ENCODE measurements at regions of chr14 and their contacts with region 1.

Region 1: DNA sequence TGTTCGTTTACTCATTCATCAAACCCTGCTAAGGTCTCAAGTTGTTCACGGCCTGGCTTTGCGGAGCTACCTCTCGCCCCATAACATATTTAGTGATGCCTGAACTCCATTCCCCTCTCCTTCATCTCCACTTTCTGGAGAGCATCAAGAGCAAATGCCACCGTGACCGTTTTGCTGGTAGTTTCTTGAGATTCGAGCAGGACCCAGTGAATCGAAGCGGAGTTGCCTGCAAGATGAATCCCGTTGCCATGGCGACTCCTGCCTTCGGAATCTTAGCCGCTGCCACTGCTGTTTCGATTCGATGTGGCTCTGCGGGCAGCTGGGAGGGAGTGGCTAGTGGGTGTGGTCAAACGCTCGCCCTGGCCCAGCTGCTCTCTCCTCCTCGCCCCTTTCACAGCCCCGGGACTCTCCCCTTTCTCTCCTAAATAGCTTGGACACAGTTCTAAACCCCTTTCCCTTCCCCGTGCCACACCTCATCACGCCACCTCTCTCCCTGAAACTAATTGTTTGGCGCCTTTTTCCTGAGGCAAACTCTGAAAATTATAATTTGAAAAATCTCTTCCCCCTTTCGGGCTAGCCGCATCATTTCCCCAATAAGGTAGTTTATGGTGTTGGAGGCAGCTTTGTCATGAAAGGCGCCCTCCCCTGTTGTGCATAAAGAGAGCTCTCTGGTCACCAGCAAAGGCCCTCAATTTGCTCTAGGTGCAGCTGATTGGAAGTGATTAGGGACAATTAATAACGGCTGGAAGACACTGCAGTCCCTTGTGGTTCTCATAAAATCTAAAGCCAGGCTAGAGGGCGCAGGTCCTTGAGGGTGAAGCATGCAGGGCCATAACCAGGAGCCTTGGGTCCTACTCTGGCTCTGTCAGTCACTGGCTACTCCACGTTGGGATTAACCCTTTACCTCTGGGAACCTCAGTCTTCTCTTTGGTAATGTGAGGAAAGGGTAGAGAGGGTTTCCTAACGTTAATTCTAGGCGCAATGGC is 1.6 kb downstream of the DAAM1 start:
- DNase-seq: peak; percentile 34 to 76 (median 49)
- ATAC-seq: peak; percentile 4
- H3K4me3 ChIP-seq: peak overlapping the region; percentile 93
- H3K4me3 Mint-ChIP-seq: peak overlapping the region; percentile 92 to 100 (median 96)
- H3K27ac ChIP-seq: peak overlapping the region; percentile 91
- H3K27ac Mint-ChIP-seq: peak overlapping the region; percentile 85 to 98 (median 93)
- H3K4me1 ChIP-seq: peaks cover 0 to 10% of the 10 kb centered on the region in 2 donors
- H3K4me1 Mint-ChIP-seq: peaks cover 15 to 30% (median 21%) of the 10 kb centered on the region in 7 donors
- H3K27me3 ChIP-seq: no peaks in the 10 kb centered on the region
- H3K27me3 Mint-ChIP-seq: peaks cover 0 to 22% (median 4%) of the 10 kb centered on the region in 5 donors

Region 2: GRCh38 chr14:58239244-58240195 is 950.6 kb before region 1 on chr14:
- CTCF ChIA-PET with region 1: no interaction called
- POLR2A ChIA-PET with region 1: no interaction called
- intact Hi-C with region 1: loop called (anchors 1 kb)
- DNase-seq: peak; percentile 66 to 89 (median 84)
- ATAC-seq: peak; percentile 39
- H3K4me3 ChIP-seq: peak overlapping the region; percentile 78
- H3K4me3 Mint-ChIP-seq: no peak overlapping the region
- H3K27ac ChIP-seq: peak overlapping the region; percentile 75
- H3K27ac Mint-ChIP-seq: no peak overlapping the region
- H3K4me1 ChIP-seq: peaks cover 8 to 9% of the 10 kb centered on the region in 2 donors
- H3K4me1 Mint-ChIP-seq: peaks cover 11 to 30% (median 27%) of the 10 kb centered on the region in 7 donors
- H3K27me3 ChIP-seq: no peaks in the 10 kb centered on the region
- H3K27me3 Mint-ChIP-seq: peaks cover 0 to 2% (median 0%) of the 10 kb centered on the region in 5 donors

Region 3: DNA sequence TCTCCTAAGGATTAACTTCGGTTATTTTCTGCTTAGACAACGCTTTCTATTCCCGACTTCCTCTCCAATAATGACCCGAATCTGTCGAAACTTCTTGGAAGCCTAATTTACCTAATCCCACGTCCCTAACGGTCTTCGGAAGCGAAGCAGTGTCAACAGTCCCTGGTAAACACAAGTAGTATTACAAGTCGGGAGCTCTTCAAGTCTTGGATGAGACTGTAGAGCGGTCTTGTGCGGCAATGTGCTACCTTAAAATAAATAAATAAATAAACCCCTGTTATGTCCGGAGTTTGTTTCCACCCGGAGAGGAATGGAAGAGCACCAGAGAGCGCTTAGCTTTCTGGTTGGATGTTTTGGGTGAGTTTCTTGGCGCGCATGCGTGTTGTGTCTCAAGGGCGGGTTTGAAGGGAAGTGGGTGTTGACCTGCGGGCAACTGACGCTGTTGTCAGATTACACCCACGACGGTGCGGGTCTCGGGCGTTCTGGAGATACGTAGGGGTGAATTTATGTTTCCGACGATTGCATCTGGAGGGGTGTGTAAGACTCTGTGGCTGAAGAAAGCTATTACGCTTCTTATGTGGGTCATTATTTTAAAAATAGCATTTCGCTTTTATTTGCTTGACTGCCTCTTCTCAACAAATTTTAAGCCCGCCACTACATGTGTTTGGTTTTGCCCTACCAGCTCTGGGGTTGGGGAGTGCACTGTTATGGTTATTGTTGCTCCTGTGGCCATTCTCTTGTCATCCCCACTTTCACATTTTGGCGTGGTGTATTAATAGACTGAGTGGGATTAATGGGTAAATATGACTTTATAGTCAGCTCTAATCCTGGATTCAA is 762.6 kb before region 1 on chr14 and contains the starts of genes KIAA0586 and TIMM9:
- CTCF ChIA-PET with region 1: no interaction called
- POLR2A ChIA-PET with region 1: no interaction called
- intact Hi-C with region 1: loop called (anchors 1 kb)
- DNase-seq: peak; percentile 82 to 98 (median 97)
- ATAC-seq: peak; percentile 94
- H3K4me3 ChIP-seq: peak within 1 kb of the TSS; percentile 88
- H3K4me3 Mint-ChIP-seq: peak within 1 kb of the TSS; percentile 82 to 100 (median 94)
- H3K27ac ChIP-seq: peak within 1 kb of the TSS; percentile 93
- H3K27ac Mint-ChIP-seq: peak within 1 kb of the TSS; percentile 95 to 99 (median 98)
- H3K4me1 ChIP-seq: peaks cover 13 to 17% of the 10 kb centered on the region in 2 donors
- H3K4me1 Mint-ChIP-seq: peaks cover 18 to 65% (median 53%) of the 10 kb centered on the region in 7 donors
- H3K27me3 ChIP-seq: no peaks in the 10 kb centered on the region
- H3K27me3 Mint-ChIP-seq: peaks cover 0 to 3% (median 0%) of the 10 kb centered on the region in 5 donors
- total RNA-seq, gene KIAA0586: 26.4 to 52.5 (median 34.8) TPM
- total RNA-seq, gene TIMM9: 22.1 to 42.5 (median 37.0) TPM

Region 4: DNA sequence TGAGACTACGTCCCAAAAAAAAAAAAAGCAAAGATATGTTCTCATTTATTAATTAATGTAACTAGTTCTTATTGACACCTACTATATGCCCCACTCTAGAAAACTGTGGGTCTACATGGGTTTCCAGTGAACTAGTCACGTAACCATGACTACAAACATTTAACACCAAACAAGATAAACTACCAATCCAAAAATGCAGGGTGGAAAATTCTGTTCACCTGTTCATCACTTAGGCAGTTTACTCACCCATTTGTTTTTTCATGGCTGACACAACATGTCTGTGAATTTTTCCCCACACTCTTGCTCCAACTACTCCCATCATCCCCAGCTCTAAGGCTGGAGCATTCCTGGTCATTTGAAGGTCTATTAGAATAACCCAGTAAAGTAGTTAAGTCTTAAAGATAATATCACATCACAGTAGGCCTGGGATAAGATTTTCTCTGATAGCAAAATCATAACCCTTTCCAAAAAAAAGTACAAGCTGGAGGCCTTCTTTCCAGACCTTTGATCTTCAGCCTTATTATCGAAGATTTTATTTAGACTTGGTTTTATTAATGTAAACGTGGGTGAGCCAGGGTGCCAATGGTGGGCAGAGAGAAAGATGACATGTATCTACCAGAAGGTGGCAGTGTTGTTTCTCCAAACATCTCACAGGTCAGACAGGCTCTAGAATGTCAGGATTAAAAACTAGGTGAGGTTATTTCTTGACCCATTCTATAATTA is 63.2 kb before region 1 on chr14:
- CTCF ChIA-PET with region 1: interaction called, 3 read pairs
- POLR2A ChIA-PET with region 1: no interaction called
- intact Hi-C with region 1: loop called in 1 of 2 experiments (anchors 2 kb)
- DNase-seq: peak in 6 of 9 donors; percentile 35 to 65 (median 56)
- ATAC-seq: peak; percentile 82
- H3K4me3 ChIP-seq: no peak overlapping the region
- H3K4me3 Mint-ChIP-seq: no peak overlapping the region
- H3K27ac ChIP-seq: no peak overlapping the region
- H3K27ac Mint-ChIP-seq: no peak overlapping the region
- H3K4me1 ChIP-seq: no peaks in the 10 kb centered on the region
- H3K4me1 Mint-ChIP-seq: no peaks in the 10 kb centered on the region
- H3K27me3 ChIP-seq: peaks cover 0 to 3% of the 10 kb centered on the region in 2 donors
- H3K27me3 Mint-ChIP-seq: peaks cover 14 to 30% (median 17%) of the 10 kb centered on the region in 5 donors

Region 5: GRCh38 chr14:59918824-59919569 is 728.9 kb after region 1 on chr14:
- CTCF ChIA-PET with region 1: no interaction called
- POLR2A ChIA-PET with region 1: no interaction called
- intact Hi-C with region 1: loop called in 1 of 2 experiments (anchors 5 kb)
- DNase-seq: peak in 4 of 9 donors; percentile 7 to 23 (median 19)
- ATAC-seq: peak; percentile 54
- H3K4me3 ChIP-seq: peak overlapping the region; percentile 47
- H3K4me3 Mint-ChIP-seq: peak overlapping the region; percentile 47 to 81 (median 76)
- H3K27ac ChIP-seq: no peak overlapping the region
- H3K27ac Mint-ChIP-seq: no peak overlapping the region
- H3K4me1 ChIP-seq: peaks cover 3 to 7% of the 10 kb centered on the region in 2 donors
- H3K4me1 Mint-ChIP-seq: peaks cover 0 to 19% (median 8%) of the 10 kb centered on the region in 7 donors
- H3K27me3 ChIP-seq: peaks cover 0 to 3% of the 10 kb centered on the region in 2 donors
- H3K27me3 Mint-ChIP-seq: peaks cover 34 to 65% (median 56%) of the 10 kb centered on the region in 5 donors

Region 6: GRCh38 chr14:60734465-60735242 is 1544.6 kb after region 1 on chr14 and contains the start of gene MNAT1:
- CTCF ChIA-PET with region 1: no interaction called
- POLR2A ChIA-PET with region 1: no interaction called
- intact Hi-C with region 1: loop called in 1 of 2 experiments (anchors 2 kb)
- DNase-seq: peak; percentile 65 to 81 (median 75)
- ATAC-seq: peak; percentile 95
- H3K4me3 ChIP-seq: peak within 1 kb of the TSS; percentile 64
- H3K4me3 Mint-ChIP-seq: peak within 1 kb of the TSS; percentile 95 to 100 (median 99)
- H3K27ac ChIP-seq: peak within 1 kb of the TSS; percentile 70
- H3K27ac Mint-ChIP-seq: peak within 1 kb of the TSS; percentile 88 to 99 (median 94)
- H3K4me1 ChIP-seq: peaks cover 0 to 10% of the 10 kb centered on the region in 2 donors
- H3K4me1 Mint-ChIP-seq: peaks cover 22 to 37% (median 29%) of the 10 kb centered on the region in 7 donors
- H3K27me3 ChIP-seq: peaks cover 0 to 4% of the 10 kb centered on the region in 2 donors
- H3K27me3 Mint-ChIP-seq: peaks cover 13 to 42% (median 22%) of the 10 kb centered on the region in 5 donors
- total RNA-seq, gene MNAT1: 16.0 to 39.1 (median 20.0) TPM